Heart left ventricle (tissue), 16 donors: ENCODE measurements at regions of chr2 and their contacts with region 1.

Region 1: GRCh38 chr2:113602869-113603466 is 24.1 kb upstream of the RABL2A start:
- DNase-seq: no peak
- ATAC-seq: peak; percentile 67 to 86 (median 80)
- H3K4me3 ChIP-seq: peak overlapping the region in 10 of 12 donors; percentile 42 to 80 (median 66)
- H3K27ac ChIP-seq: peak overlapping the region in 11 of 12 donors; percentile 46 to 96 (median 76)
- H3K4me1 ChIP-seq: peaks cover 0 to 6% (median 0%) of the 10 kb centered on the region in 12 donors
- H3K27me3 ChIP-seq: no peaks in the 10 kb centered on the region
- CTCF ChIP-seq: no peak
- POLR2A ChIP-seq: no peak

Region 2: DNA sequence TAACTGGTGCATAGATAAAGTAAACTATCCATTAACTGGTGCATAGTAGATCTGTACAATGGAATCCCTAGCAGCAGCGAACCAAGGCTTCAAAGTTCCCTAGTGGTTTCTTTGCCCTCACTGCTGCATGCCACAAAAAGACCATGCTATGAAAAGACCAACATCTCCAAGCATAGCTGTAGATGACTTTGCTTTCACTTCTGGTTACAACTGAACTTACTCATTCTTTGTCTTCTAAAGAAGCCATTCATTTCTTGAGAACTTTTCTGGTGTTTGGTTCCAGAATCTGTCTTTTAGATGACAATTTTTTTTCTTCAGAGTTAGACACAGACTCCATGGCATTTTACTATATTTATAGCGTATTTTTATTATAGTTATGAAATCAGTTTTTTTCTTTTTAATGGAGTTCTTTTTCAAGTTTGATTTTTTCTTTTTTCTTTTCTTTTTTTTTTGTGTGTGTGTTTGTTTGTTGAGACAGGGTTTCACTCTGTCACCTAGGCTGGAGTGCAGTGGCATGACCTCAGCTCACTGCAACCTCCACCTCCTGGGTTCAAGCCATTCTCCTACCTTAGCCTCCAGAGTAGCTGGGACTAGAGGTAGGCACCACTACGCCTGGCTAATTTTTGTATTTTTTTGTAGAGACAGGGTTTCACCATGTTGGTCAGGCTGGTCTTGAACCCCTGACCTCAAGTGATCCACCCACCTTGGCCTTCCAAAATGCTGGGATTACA is 89.9 kb after region 1 on chr2:
- intact Hi-C with region 1: loop called in 1 of 10 experiments (anchors 5 kb)
- DNase-seq: no peak
- ATAC-seq: peak in 1 of 4 donors; percentile 13
- H3K4me3 ChIP-seq: no peak overlapping the region
- H3K27ac ChIP-seq: peak overlapping the region in 4 of 12 donors; percentile 10 to 70 (median 28)
- H3K4me1 ChIP-seq: peaks cover 0 to 21% (median 0%) of the 10 kb centered on the region in 12 donors
- H3K27me3 ChIP-seq: no peaks in the 10 kb centered on the region
- CTCF ChIP-seq: no peak
- POLR2A ChIP-seq: no peak

Region 3: GRCh38 chr2:114237331-114237730 is 634.4 kb after region 1 on chr2:
- intact Hi-C with region 1: no loop called
- DNase-seq: no peak
- ATAC-seq: no peak
- H3K4me3 ChIP-seq: no peak overlapping the region
- H3K27ac ChIP-seq: no peak overlapping the region
- H3K4me1 ChIP-seq: no peaks in the 10 kb centered on the region
- H3K27me3 ChIP-seq: no peaks in the 10 kb centered on the region
- CTCF ChIP-seq: no peak
- POLR2A ChIP-seq: no peak